ENCODE measurements at regions of chr2 and their contacts with region 1.

Region 1: GRCh38 chr2:209663150-209663549 is 108.5 kb upstream of the UNC80 start:
- DNase-seq: peak; percentile 70
- H3K4me3 ChIP-seq: peak overlapping the region; percentile 12 to 48
- H3K27ac ChIP-seq: peak overlapping the region; percentile 62 to 98
- H3K4me1 ChIP-seq: peaks cover 9% of the 10 kb centered on the region in 2 experiments; a peak in 3 of 4 replicates
- H3K27me3 ChIP-seq: no peaks in the 10 kb centered on the region
- CTCF ChIP-seq: no peak
- EP300 ChIP-seq: peak; percentile 47 to 98; a peak in 3 of 4 replicates
- RAD21 ChIP-seq: peak; percentile 46

Region 2: DNA sequence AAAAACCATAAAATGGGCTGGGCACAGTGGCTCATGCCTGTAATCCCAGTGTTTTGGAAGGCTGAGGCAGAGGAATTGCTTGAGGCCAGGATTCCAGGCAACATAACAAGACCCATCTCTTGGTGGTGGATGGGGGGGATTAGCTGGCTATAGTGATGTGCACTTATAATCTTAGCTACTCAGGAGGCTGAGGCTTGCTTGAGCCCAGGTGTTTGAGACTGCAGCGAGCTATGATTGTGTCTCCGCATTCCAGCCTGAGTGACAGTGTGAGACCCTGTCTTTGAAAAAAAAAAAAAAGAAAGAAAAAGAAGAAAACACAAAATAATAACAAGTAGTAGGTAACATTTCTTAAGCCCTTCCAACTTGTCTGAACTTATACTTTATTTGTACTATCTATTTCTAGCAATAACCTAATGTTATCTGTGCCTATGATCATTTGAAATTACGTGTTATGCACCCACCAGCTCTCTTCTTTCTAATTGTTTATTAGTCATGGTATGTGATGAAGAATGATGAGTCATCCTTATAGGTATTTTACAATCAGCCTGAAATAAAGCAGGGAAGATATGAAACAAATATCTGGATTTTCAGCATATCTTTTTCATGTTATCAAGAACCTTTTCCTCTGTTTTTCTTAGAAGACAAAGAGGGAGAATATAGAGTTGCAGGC is 20.9 kb before region 1 on chr2:
- CTCF ChIA-PET with region 1: no interaction called
- POLR2A ChIA-PET with region 1: no interaction called
- DNase-seq: no peak
- H3K4me3 ChIP-seq: no peak overlapping the region
- H3K27ac ChIP-seq: no peak overlapping the region; a peak in 1 of 4 replicates
- H3K4me1 ChIP-seq: peaks cover 2 to 4% of the 10 kb centered on the region in 2 experiments; a peak in 3 of 4 replicates
- H3K27me3 ChIP-seq: no peaks in the 10 kb centered on the region
- CTCF ChIP-seq: no peak
- EP300 ChIP-seq: peak in 1 of 2 experiments; percentile 37; a peak in 1 of 4 replicates
- RAD21 ChIP-seq: no peak

Region 3: DNA sequence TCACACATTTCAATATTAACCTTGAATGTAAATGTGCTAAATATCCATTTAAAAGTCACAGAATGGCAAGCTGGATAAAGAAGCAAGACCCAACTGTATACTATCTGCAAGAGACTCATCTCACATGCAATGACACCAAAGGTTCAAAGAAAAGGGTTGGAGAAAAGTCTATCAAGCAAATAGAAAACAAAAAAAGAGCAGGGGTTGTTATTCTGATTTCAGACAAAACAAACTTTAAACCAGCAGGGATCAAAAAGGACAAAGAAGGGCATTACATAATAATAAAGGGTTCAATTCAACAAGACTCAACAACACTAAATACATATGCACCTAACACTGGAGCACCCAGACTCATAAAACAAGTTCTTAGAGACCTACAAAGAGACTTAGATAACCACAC is 94.0 kb after region 1 on chr2:
- CTCF ChIA-PET with region 1: no interaction called
- POLR2A ChIA-PET with region 1: no interaction called
- DNase-seq: no peak
- H3K4me3 ChIP-seq: no peak overlapping the region
- H3K27ac ChIP-seq: no peak overlapping the region
- H3K4me1 ChIP-seq: no peaks in the 10 kb centered on the region
- H3K27me3 ChIP-seq: no peaks in the 10 kb centered on the region
- CTCF ChIP-seq: no peak
- EP300 ChIP-seq: no peak
- RAD21 ChIP-seq: no peak

Region 4: GRCh38 chr2:209771474-209772289 is 108.5 kb after region 1 on chr2 and contains the start of gene UNC80:
- CTCF ChIA-PET with region 1: no interaction called
- POLR2A ChIA-PET with region 1: interaction called, 17 read pairs
- DNase-seq: peak; percentile 95
- H3K4me3 ChIP-seq: peak within 1 kb of the TSS; percentile 60 to 63
- H3K27ac ChIP-seq: peak within 1 kb of the TSS in 1 of 2 experiments; percentile 85; a peak in 2 of 4 replicates
- H3K4me1 ChIP-seq: peaks cover 0 to 5% of the 10 kb centered on the region in 2 experiments; a peak in 2 of 4 replicates
- H3K27me3 ChIP-seq: no peaks in the 10 kb centered on the region; the same call in 1 of the 2 replicates
- CTCF ChIP-seq: no peak
- EP300 ChIP-seq: no peak
- RAD21 ChIP-seq: peak; percentile 16; the same call in 1 of the 2 replicates
- polyA plus RNA-seq, gene UNC80: 0.59 and 1.3 TPM in 2 replicates